ENCODE measurements at regions of chr3 and their contacts with region 1.

Region 1: DNA sequence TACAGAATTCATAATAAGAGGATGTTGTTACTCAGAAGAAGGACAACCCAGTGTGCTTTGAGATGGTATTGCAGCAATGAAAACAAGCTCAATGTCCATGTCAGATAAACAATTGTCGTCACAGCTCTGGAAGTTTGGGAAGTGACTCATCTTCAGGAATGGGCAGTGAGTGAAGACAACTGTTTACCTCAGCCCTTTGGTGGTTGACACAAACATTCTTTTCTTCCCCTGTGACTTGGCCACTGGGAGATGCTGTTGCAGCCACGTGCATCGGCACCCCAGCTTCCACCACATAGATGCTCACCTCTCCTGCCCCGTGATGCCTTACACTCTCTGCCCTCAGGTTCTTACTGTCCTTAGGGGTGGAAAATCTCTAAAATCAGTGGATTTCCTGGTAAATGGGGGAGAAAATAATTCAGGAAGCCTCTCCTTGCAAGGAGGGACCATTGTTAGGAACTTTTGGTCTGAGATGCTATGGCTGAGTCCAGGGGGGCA is 114.1 kb upstream of the GALNT15 start:
- DNase-seq: peak; percentile 100
- H3K4me3 ChIP-seq: no peak overlapping the region
- CTCF ChIP-seq: peak; percentile 38

Region 2: GRCh38 chr3:16079519-16079918 is 19.1 kb after region 1 on chr3:
- CTCF ChIA-PET with region 1: interaction called, 6 read pairs
- POLR2A ChIA-PET with region 1: interaction called, 16 read pairs
- DNase-seq: no peak
- H3K4me3 ChIP-seq: no peak overlapping the region
- CTCF ChIP-seq: no peak

Region 3: DNA sequence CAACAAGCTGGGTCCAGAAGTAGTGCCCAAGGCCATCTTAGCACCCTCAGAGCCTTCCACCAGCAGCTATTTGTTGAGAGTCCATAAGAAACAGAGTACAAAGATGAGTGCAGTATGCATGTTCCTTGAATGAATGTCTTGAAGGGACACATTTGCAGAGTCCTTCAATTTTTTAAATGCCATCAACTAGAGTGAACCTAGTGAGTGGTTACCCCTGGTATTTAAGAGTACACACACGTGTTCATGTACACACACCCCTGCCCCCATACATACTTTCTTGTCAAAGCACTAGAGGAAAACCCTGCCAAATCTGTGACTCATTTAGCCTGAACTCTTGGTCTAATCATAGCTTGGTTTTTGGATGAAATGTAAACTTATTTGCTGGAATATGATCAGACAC is 29.6 kb after region 1 on chr3:
- CTCF ChIA-PET with region 1: interaction called, 4 read pairs
- POLR2A ChIA-PET with region 1: interaction called, 11 read pairs
- DNase-seq: peak; percentile 99
- H3K4me3 ChIP-seq: no peak overlapping the region
- CTCF ChIP-seq: no peak

Region 4: DNA sequence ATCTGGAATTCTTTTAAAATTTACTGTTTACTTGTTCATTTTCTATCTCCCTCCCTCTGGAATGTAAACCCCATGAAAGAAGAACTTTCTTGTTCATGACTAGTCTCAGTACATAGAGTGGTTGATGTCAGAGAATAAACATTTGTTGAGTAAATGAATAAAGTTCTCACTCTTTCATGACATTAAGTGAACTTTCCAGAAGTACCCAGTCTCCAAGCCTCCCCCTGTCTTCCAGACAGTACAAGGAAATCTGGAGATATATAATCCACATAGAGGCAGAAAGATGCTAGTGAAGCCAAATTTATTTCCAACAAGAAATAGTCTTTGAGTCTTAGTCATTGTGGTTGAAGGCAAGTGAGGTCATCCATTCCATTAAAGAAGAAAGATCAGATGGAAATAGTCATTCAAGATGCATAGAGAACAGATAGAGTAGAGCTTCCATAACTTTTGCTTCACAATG is 42.5 kb after region 1 on chr3:
- CTCF ChIA-PET with region 1: interaction called, 3 read pairs
- POLR2A ChIA-PET with region 1: interaction called, 21 read pairs
- DNase-seq: peak; percentile 88
- H3K4me3 ChIP-seq: no peak overlapping the region; the same call in 1 of the 2 replicates
- CTCF ChIP-seq: no peak

Measured in AG04449 (cell line).